PC-9 (cell line): ENCODE measurements at regions of chr3 and their contacts with region 1.

Region 1: DNA sequence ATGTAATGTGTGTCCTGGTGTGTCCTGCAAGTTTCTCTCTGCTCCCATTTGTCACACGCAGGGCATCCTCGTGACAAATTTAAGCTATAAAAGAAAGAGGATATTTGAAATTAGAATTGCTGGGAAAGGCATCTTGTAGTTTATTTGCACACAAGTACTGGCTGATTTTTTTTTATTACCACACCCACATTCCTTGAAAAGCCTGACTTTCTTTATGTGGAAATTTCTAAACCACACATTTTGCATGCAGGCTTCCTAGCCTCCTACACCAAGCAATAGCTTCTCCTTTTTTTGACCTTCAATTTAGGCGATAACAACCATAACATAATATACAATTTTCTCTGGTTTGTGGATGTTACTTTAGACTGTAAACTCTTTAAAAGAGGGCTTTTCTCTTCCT is 126.1 kb downstream of the SERPINI1 start:
- DNase-seq: no peak
- H3K4me3 ChIP-seq: no peak overlapping the region
- H3K27ac ChIP-seq: no peak overlapping the region
- H3K4me1 ChIP-seq: 0 out of 2 replicates have a peak, but pooled peaks cover 9% of the 10 kb centered on the region
- H3K27me3 ChIP-seq: no peaks in the 10 kb centered on the region
- CTCF ChIP-seq: no peak

Region 2: GRCh38 chr3:165994293-165994692 is 1867.4 kb before region 1 on chr3:
- CTCF ChIA-PET with region 1: no interaction called
- POLR2A ChIA-PET with region 1: no interaction called
- intact Hi-C with region 1: loop called (anchors 10 kb)
- DNase-seq: no peak
- H3K4me3 ChIP-seq: no peak overlapping the region
- H3K27ac ChIP-seq: no peak overlapping the region
- H3K4me1 ChIP-seq: no peaks in the 10 kb centered on the region
- H3K27me3 ChIP-seq: no peaks in the 10 kb centered on the region
- CTCF ChIP-seq: no peak

Region 3: DNA sequence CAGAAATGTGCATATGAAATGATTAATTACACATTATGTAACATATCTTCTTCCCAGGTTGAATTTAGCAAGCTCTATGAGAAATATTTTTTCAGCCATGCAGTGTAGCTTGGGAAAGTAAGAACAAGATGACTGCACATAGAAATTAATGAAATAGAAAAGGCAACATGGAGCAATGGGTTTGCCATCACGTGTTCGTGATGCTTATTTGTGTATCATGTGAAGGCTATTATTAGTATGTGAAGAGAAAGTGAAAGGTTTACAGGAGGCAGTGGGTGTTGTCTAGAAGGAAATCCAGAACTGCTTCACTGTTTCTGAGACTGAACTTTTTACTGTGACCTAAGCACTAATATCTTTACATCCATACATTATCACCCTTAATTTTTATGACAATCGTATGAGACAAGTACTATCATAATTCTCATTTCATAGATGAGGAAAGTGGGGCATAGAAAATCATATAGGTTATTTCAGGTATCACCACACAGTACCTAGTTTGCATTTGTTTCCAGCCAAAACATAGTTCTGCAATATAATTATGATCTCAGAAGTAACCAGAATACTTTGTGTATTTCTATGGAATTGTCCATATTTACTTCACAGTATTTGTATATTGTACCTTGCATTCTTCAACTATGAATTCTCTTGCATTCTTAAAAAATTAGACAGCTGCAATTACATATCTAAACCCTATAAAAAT is 111.2 kb before region 1 on chr3:
- CTCF ChIA-PET with region 1: no interaction called
- POLR2A ChIA-PET with region 1: no interaction called
- intact Hi-C with region 1: no loop called
- DNase-seq: no peak
- H3K4me3 ChIP-seq: no peak overlapping the region
- H3K27ac ChIP-seq: no peak overlapping the region
- H3K4me1 ChIP-seq: no peaks in the 10 kb centered on the region
- H3K27me3 ChIP-seq: no peaks in the 10 kb centered on the region
- CTCF ChIP-seq: no peak

Region 4: DNA sequence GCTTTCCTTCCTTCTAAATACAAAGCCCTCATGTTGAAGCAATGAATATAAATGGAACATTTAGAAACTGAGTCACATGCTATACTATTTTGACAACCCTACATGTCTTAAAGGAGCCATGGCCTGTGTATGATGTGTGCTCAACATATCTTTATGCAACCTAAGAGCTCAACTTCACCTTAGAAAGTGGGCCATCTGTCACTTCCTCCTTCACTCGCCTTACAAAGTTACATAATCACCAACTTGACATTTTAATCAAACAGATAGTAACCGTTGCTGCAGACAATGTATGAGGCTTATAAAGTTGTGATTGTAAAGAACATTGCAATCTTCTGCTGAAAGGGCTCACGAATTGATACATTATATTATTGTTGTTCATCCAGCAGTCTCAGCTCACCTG is 37.4 kb after region 1 on chr3:
- CTCF ChIA-PET with region 1: no interaction called
- POLR2A ChIA-PET with region 1: no interaction called
- intact Hi-C with region 1: no loop called
- DNase-seq: no peak
- H3K4me3 ChIP-seq: no peak overlapping the region
- H3K27ac ChIP-seq: no peak overlapping the region
- H3K4me1 ChIP-seq: no peaks in the 10 kb centered on the region
- H3K27me3 ChIP-seq: no peaks in the 10 kb centered on the region
- CTCF ChIP-seq: no peak